Mammary epithelial cell (primary cell): ENCODE measurements at regions of chr1 and their contacts with region 1.

Region 1: DNA sequence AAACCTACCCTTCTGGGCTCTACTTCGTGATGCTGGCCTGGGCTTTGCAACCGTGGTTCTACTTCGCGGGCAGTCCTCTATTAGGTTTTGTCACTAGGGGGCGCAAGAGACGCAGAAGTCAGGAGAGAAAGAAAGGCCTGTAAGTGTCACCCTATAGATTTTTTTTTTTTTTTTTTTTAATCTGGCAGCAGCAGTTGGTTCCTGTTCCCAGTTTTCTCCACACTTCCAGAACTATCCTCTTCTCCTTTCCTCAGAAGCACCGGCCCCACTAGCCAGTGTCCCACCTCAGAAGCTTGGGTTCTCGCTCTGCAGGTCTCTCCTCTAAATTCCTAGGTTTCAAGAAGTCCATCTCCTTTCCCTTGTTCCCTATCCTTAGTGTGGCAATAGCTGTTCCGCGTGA is 9.1 kb upstream of the LCE2D start:
- DNase-seq: peak; percentile 54
- H3K4me3 ChIP-seq: no peak overlapping the region
- H3K27ac ChIP-seq: no peak overlapping the region
- H3K4me1 ChIP-seq: no peaks in the 10 kb centered on the region
- H3K27me3 ChIP-seq: no peaks in the 10 kb centered on the region
- CTCF ChIP-seq: peak; percentile 77 to 88

Region 2: GRCh38 chr1:152502496-152503180 is 151.5 kb before region 1 on chr1:
- CTCF ChIA-PET with region 1: interaction called, 13 read pairs
- dilution Hi-C with region 1: no loop called
- in situ Hi-C with region 1: no loop called
- intact Hi-C with region 1: loop called (anchors 2 kb)
- DNase-seq: peak; percentile 97
- H3K4me3 ChIP-seq: no peak overlapping the region
- H3K27ac ChIP-seq: peak overlapping the region; percentile 89
- H3K4me1 ChIP-seq: peaks cover 56% of the 10 kb centered on the region
- H3K27me3 ChIP-seq: no peaks in the 10 kb centered on the region
- CTCF ChIP-seq: no peak

Region 3: DNA sequence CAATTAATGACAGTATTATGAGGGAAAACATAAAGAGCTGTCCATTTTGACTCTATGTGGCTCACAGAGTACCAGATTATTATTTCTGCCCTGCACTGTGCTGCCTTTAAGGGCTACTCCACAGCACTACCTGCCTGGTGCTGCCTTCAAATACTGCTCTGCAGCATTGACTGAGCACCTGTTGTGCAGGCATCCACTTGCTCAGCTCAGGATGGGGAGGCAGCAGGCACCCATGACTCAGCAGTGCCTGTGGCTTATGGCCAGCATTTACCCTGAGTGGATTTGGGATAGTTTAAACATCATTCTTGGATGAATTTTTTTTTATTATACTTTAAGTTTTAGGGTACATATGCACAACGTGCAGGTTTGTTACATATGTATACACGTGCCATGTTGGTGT is 102.8 kb after region 1 on chr1:
- CTCF ChIA-PET with region 1: interaction called, 6 read pairs
- dilution Hi-C with region 1: no loop called
- in situ Hi-C with region 1: no loop called
- intact Hi-C with region 1: loop called (anchors 1 kb)
- DNase-seq: peak; percentile 65
- H3K4me3 ChIP-seq: no peak overlapping the region
- H3K27ac ChIP-seq: no peak overlapping the region
- H3K4me1 ChIP-seq: peaks cover 63% of the 10 kb centered on the region
- H3K27me3 ChIP-seq: no peaks in the 10 kb centered on the region
- CTCF ChIP-seq: no peak

Region 4: DNA sequence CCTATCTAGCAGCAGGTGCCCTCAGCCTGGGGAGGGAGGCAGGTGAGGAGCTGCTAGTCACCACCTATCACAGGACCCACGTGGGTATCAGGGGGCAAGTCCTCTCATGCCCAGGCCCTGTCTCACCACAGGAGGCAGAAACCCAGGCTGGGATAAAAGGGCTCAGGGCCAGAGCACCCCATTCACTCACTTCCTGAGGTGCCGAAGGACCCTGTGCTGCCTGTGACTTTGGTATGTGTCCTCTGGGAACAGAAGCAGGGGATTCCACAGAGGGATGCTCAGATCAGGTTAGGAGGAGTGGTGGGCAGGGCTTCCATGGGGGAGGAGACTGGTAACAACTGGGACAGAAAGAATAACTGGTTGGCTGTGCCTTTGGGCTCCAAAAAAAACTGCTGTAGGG is 132.0 kb after region 1 on chr1 and contains the start of gene LCE1E:
- CTCF ChIA-PET with region 1: no interaction called
- dilution Hi-C with region 1: no loop called
- in situ Hi-C with region 1: no loop called
- intact Hi-C with region 1: no loop called
- DNase-seq: peak; percentile 89
- H3K4me3 ChIP-seq: peak within 1 kb of the TSS in 2 of 3 experiments; percentile 23 to 41
- H3K27ac ChIP-seq: peak within 1 kb of the TSS; percentile 33
- H3K4me1 ChIP-seq: peaks cover 17% of the 10 kb centered on the region
- H3K27me3 ChIP-seq: no peaks in the 10 kb centered on the region
- CTCF ChIP-seq: peak in 1 of 2 donors; percentile 31
- total RNA-seq, gene LCE1E: 2.9 TPM in 1 of 2 donors, not detected in the other

Region 5: DNA sequence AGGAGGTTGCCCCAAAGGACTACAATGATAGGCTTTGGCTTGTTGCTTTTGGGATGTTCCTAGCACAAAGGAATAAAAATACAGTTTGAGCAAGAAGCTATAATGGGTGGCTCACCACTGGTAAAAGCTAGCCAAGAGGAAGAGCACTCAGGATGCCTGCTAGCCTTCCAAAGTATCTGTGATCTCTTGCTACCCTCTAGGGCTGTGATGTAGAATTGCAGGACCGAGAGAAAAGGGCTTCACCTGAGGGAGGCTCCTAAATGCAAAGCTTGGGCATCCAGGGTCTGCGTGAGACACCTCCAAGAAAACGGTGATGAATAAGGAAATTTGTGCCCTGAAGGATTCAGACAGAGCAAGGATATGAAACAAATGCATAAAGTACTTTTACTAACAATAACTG is 272.0 kb after region 1 on chr1:
- CTCF ChIA-PET with region 1: no interaction called
- dilution Hi-C with region 1: no loop called
- in situ Hi-C with region 1: no loop called
- intact Hi-C with region 1: loop called (anchors 1 kb)
- DNase-seq: peak; percentile 64
- H3K4me3 ChIP-seq: no peak overlapping the region
- H3K27ac ChIP-seq: no peak overlapping the region
- H3K4me1 ChIP-seq: peaks cover 12% of the 10 kb centered on the region
- H3K27me3 ChIP-seq: no peaks in the 10 kb centered on the region
- CTCF ChIP-seq: peak; percentile 84 to 89

Region 6: GRCh38 chr1:153220606-153221303 is 566.6 kb after region 1 on chr1:
- CTCF ChIA-PET with region 1: no interaction called
- dilution Hi-C with region 1: loop called (anchors 10 kb)
- in situ Hi-C with region 1: loop called in 1 of 2 experiments (anchors 25 kb)
- intact Hi-C with region 1: loop called (anchors 5 kb)
- DNase-seq: no peak
- H3K4me3 ChIP-seq: no peak overlapping the region
- H3K27ac ChIP-seq: no peak overlapping the region
- H3K4me1 ChIP-seq: no peaks in the 10 kb centered on the region
- H3K27me3 ChIP-seq: no peaks in the 10 kb centered on the region
- CTCF ChIP-seq: no peak